Activated T-helper 1 cell treated with anti-CD3 and anti-CD28 coated beads, Interleukin-12 subunit alpha, Interleukin-12 subunit beta, Interleukin-2, Interleukin-4 antibody, amounts not matched to agents 30 ng/mL and 10 ng/mL and 1 ng/mL, durations not matched to agents 14 hours and 24 hours and 36 hours (primary cell): ENCODE measurements at regions of chr3 and their contacts with region 1.

Region 1: GRCh38 chr3:128845778-128846485 is 33.5 kb upstream of the ACAD9 start:
- DNase-seq: peak; percentile 75
- H3K4me3 Mint-ChIP-seq: peak overlapping the region; percentile 77
- H3K27ac Mint-ChIP-seq: peak overlapping the region; percentile 90
- H3K4me1 Mint-ChIP-seq: peaks cover 18% of the 10 kb centered on the region
- H3K27me3 Mint-ChIP-seq: no peaks in the 10 kb centered on the region

Region 2: DNA sequence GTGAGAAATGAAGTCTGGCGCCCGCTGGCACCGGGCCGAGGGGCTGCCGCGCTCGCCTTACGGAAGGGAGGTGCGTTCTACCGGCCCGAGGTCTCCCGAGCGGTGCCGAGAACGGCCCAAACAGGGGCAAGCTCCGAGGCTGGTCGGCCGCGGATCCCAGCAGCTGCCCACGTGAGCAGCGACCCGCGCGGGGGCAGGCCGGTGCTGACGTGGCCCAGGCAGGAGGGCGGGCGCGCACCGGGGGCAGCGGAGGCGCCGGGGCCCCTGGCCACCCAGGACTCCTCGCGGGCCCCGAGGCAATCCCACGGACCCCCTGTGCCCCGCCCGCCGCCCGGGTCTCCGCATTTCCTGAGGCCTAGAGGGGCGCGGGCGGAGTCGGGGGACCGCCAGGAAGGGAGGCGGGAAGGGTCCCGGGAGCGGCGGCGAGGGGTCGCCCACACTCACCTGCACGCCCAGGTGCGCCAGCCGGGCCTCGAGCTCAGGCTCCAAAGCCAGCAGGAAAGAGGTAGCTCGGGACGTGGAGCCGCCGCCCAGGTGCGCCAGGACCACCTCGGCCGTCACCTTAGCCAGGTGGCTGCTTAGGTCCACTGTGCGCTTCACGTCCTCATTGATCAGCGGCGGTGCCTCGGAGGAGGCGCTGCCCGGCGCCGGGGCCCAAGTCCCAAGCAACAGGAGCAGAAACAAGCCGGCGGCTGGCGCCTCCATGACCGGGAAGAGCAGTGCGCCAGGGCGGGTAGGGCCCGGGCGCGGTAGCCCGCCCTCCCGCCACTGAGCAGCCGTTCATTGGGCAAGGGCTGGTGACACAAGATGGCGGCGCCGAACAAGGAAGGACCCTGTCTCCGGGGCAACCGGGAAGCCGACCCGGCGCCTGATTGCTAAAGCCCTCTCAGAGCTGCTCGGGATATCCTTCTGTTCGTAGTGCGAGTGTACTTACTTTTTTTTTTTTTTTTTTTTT is 195.6 kb before region 1 on chr3 and contains the start of gene RPN1:
- intact Hi-C with region 1: loop called (anchors 1 kb)
- DNase-seq: peak; percentile 94
- H3K4me3 Mint-ChIP-seq: peak within 1 kb of the TSS; percentile 90
- H3K27ac Mint-ChIP-seq: peak within 1 kb of the TSS; percentile 92
- H3K4me1 Mint-ChIP-seq: peaks cover 26% of the 10 kb centered on the region
- H3K27me3 Mint-ChIP-seq: no peaks in the 10 kb centered on the region
- total RNA-seq, gene RPN1: 190 and 194 TPM in 2 replicates

Region 3: DNA sequence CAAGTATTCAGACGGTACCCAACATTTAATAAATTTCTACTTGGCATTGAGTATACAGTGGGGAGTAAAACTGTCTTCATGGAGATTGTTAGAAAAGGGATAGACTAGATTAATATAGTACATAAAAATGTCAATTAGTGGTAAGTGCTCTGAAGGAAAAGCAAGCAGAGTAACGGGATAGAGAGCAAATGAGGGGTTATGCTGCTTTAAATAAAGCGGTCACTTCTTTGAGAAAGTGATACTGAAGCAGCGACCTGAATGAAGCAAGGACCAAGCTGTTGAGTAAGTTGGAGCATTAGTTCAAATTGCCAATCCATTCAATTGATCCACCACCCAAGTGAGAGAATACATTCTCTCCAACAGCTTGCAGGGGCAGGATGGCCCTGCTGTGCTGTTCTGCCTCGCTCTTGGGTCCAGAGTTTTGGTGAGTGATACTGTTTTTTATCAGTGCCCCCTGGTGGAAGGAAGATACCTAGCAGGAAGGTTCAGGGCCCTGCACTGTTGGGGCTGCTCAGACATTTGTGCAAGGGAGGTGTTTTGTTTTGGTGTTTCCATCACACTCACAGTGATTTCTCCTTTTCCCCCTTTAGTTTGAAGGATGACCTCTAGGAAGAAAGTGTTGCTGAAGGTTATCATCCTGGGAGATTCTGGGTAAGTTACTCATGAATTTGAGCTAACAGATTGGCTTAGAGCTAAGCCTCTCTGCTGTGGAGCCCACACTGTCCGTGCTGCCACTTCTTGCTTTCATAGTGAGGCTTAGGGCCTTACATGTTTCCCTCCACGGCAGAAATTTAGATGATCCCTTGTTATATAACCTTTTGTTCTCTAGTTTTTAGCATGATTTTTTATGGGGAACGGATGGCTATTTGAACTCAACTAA is 50.9 kb before region 1 on chr3:
- intact Hi-C with region 1: loop called (anchors 2 kb)
- DNase-seq: peak; percentile 62
- H3K4me3 Mint-ChIP-seq: peak overlapping the region; percentile 49
- H3K27ac Mint-ChIP-seq: peak overlapping the region; percentile 92
- H3K4me1 Mint-ChIP-seq: peaks cover 79% of the 10 kb centered on the region
- H3K27me3 Mint-ChIP-seq: no peaks in the 10 kb centered on the region